HepG2 (cell line): ENCODE measurements at regions of chr4 and their contacts with region 1.

Region 1: DNA sequence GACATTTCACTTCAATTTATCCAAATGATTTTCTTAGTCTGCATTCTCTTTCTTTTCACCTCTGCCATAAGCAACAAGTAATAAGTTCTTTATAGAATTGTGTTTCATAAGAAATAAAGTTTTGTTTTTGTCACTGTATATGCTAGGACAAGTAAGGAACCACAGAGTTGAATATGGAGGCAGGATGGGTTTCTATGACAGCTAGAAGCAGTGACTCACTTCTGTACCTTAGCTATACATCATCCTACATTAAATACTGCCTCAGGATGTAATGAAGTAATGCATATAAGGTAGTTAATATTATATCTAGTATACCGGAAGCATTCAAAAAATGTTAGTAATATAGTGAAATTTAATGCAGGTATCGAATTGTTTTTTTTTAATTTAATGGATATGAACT is 128.0 kb downstream of the PPA2 start:
- DNase-seq: no peak
- ATAC-seq: peak; percentile 16; the same call in 1 of the 3 replicates
- H3K4me3 ChIP-seq: no peak overlapping the region
- H3K27ac ChIP-seq: no peak overlapping the region
- H3K4me1 ChIP-seq: peaks cover 47% of the 10 kb centered on the region
- H3K27me3 ChIP-seq: no peaks in the 10 kb centered on the region
- CTCF ChIP-seq: no peak
- EP300 ChIP-seq: no peak
- POLR2A ChIP-seq: no peak
- RAD21 ChIP-seq: no peak

Region 2: DNA sequence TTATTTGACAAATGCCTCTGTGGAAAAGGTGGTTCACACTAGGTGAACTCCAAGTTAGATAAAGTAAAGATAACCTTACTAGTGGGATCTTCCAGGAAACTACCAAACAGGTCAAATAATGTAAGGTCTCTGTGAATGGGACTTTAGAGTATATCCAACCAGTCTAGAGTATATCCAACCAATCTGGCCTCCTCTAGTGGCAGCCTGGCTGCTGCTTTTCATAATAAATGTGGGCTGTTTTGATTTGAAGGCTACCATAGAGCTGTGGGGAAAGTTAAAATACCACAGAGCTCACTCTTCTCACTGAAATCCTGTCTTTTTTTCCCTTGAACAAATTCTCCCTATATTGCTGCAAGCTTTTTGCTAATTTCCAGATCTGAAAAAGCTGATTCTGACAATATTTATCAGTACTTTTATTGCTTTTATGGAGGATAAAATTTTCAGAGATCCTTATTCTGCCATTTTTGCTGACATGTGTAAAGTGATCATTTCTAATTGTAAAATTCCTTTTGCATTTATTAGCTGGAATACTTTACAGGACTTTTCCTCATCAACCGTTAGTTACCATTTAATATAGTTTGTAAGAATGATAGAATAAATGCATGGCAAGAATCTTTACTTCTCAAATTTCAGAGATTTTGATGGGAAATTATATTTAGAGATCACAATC is 87.9 kb before region 1 on chr4:
- CTCF ChIA-PET with region 1: no interaction called
- POLR2A ChIA-PET with region 1: no interaction called
- in situ Hi-C with region 1: no loop called
- intact Hi-C with region 1: no loop called
- DNase-seq: no peak
- ATAC-seq: peak; percentile 56; the same call in 2 of the 3 replicates
- H3K4me3 ChIP-seq: no peak overlapping the region
- H3K27ac ChIP-seq: no peak overlapping the region
- H3K4me1 ChIP-seq: no peaks in the 10 kb centered on the region
- H3K27me3 ChIP-seq: no peaks in the 10 kb centered on the region
- CTCF ChIP-seq: no peak
- EP300 ChIP-seq: no peak
- POLR2A ChIP-seq: no peak
- RAD21 ChIP-seq: no peak

Region 3: DNA sequence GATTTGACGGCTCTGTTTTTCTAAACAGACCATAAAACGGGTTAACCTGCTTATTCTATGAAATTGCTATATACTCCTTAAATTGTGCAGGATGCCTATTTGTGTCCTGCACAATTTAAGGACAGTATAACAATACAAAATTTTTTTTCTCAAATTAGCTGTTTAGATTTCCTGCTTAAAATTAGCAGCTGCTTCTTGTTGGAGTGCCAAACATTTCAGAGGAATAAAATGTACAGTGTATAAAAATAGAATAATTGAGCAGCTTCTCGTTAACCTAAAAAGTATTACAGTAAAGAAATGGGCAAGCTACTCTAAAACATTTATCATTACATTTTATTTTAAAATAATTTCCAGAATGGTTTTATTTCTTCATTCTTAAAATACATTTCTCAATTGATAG is 27.5 kb after region 1 on chr4:
- CTCF ChIA-PET with region 1: no interaction called
- POLR2A ChIA-PET with region 1: no interaction called
- in situ Hi-C with region 1: no loop called
- intact Hi-C with region 1: loop called (anchors 1 kb)
- DNase-seq: no peak
- ATAC-seq: no peak
- H3K4me3 ChIP-seq: no peak overlapping the region
- H3K27ac ChIP-seq: no peak overlapping the region
- H3K4me1 ChIP-seq: 0 out of 2 replicates have a peak, but pooled peaks cover 5% of the 10 kb centered on the region
- H3K27me3 ChIP-seq: no peaks in the 10 kb centered on the region
- CTCF ChIP-seq: no peak
- EP300 ChIP-seq: no peak
- POLR2A ChIP-seq: no peak
- RAD21 ChIP-seq: no peak

Region 4: GRCh38 chr4:105417624-105418023 is 71.8 kb after region 1 on chr4:
- CTCF ChIA-PET with region 1: no interaction called
- POLR2A ChIA-PET with region 1: no interaction called
- in situ Hi-C with region 1: no loop called
- intact Hi-C with region 1: loop called (anchors 5 kb)
- DNase-seq: peak; percentile 85
- ATAC-seq: peak; percentile 92
- H3K4me3 ChIP-seq: no peak overlapping the region
- H3K27ac ChIP-seq: no peak overlapping the region
- H3K4me1 ChIP-seq: peaks cover 22% of the 10 kb centered on the region
- H3K27me3 ChIP-seq: no peaks in the 10 kb centered on the region
- CTCF ChIP-seq: no peak
- EP300 ChIP-seq: peak; percentile 31 to 72; a peak in 2 of 4 replicates
- POLR2A ChIP-seq: no peak
- RAD21 ChIP-seq: no peak